Left ventricle myocardium superior (tissue), 1 donor: ENCODE measurements at regions of chr22 and their contacts with region 1.

Region 1: GRCh38 chr22:25419237-25420113 is 145.0 kb upstream of the GRK3 start:
- DNase-seq: no peak
- ATAC-seq: peak; percentile 56

Region 2: DNA sequence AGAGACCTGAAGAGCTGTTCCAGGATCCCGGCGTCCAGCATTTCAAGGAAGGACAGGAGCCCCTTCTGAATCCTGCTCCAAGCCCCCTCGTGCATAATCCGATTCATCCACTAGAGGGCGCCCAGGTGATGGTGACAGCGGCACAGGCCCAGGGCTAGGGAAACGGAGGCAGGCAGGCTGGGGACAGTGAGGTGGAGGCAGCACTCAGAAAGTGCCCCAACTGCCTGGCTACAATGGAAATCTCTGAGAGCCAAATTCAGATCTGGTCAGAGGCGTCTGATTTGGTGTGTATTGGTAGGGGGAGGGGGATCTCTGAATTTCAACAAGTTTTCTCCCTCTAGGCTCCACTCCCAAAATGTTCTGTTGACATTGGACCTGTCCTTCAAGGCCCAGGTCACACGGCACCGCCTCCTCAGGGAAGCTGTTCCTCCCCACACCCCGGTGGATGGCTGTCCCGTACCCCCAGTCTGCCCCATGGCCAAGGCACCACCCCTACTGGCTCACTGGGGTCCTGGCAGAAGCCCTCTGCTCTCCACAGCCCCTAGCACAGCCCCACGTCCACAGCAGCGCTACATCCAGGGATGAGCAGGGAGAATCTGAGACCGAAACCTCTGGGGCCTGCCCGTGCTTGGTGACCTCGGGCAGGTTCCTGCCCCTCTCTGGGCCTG is 57.1 kb before region 1 on chr22:
- intact Hi-C with region 1: loop called (anchors 10 kb)
- DNase-seq: peak; percentile 79
- ATAC-seq: peak; percentile 62